CD8-positive, alpha-beta memory T cell (primary cell): ENCODE measurements at regions of chr9 and their contacts with region 1.

Region 1: DNA sequence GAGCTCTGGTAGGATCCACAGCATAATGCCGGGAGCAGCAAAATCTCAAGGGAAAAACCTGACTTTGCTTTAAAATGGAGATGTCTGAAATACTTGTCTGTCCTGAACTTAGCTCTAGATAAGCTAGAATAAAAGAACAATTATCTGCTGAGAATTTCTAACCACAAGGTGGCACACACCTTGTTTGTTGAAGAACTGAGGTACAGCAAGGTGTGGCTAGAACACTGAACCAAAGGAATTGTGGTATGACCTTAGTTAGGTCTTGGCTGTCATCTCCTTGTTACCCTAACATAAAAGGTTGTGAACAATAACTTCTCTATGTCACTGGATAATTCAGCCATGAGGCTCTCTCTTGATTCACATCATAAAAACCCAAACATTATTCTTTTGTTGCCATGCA is 72.3 kb upstream of the ANXA1 start:
- DNase-seq: peak in 1 of 5 donors; percentile 3
- H3K4me3 ChIP-seq: no peak overlapping the region
- H3K4me3 Mint-ChIP-seq: no peak overlapping the region
- H3K27ac ChIP-seq: no peak overlapping the region
- H3K27ac Mint-ChIP-seq: no peak overlapping the region
- H3K4me1 ChIP-seq: no peaks in the 10 kb centered on the region
- H3K4me1 Mint-ChIP-seq: no peaks in the 10 kb centered on the region
- H3K27me3 ChIP-seq: no peaks in the 10 kb centered on the region
- H3K27me3 Mint-ChIP-seq: peaks cover 8 to 35% of the 10 kb centered on the region in 2 donors

Region 2: GRCh38 chr9:72734631-72735030 is 344.7 kb before region 1 on chr9:
- CTCF ChIA-PET with region 1: no interaction called
- POLR2A ChIA-PET with region 1: no interaction called
- DNase-seq: no peak
- H3K4me3 ChIP-seq: no peak overlapping the region
- H3K4me3 Mint-ChIP-seq: no peak overlapping the region
- H3K27ac ChIP-seq: no peak overlapping the region
- H3K27ac Mint-ChIP-seq: no peak overlapping the region
- H3K4me1 ChIP-seq: no peaks in the 10 kb centered on the region
- H3K4me1 Mint-ChIP-seq: no peaks in the 10 kb centered on the region
- H3K27me3 ChIP-seq: no peaks in the 10 kb centered on the region
- H3K27me3 Mint-ChIP-seq: peaks cover 0 to 9% of the 10 kb centered on the region in 2 donors

Region 3: GRCh38 chr9:72997387-72997995 is 81.8 kb before region 1 on chr9:
- CTCF ChIA-PET with region 1: no interaction called
- POLR2A ChIA-PET with region 1: no interaction called
- DNase-seq: no peak
- H3K4me3 ChIP-seq: no peak overlapping the region
- H3K4me3 Mint-ChIP-seq: peak overlapping the region in 3 of 7 donors; percentile 31 to 60 (median 57)
- H3K27ac ChIP-seq: no peak overlapping the region
- H3K27ac Mint-ChIP-seq: peak overlapping the region in 1 of 8 donors; percentile 15
- H3K4me1 ChIP-seq: no peaks in the 10 kb centered on the region
- H3K4me1 Mint-ChIP-seq: peaks cover 3 to 20% (median 3%) of the 10 kb centered on the region in 3 donors
- H3K27me3 ChIP-seq: no peaks in the 10 kb centered on the region
- H3K27me3 Mint-ChIP-seq: peaks cover 0 to 4% of the 10 kb centered on the region in 2 donors

Region 4: DNA sequence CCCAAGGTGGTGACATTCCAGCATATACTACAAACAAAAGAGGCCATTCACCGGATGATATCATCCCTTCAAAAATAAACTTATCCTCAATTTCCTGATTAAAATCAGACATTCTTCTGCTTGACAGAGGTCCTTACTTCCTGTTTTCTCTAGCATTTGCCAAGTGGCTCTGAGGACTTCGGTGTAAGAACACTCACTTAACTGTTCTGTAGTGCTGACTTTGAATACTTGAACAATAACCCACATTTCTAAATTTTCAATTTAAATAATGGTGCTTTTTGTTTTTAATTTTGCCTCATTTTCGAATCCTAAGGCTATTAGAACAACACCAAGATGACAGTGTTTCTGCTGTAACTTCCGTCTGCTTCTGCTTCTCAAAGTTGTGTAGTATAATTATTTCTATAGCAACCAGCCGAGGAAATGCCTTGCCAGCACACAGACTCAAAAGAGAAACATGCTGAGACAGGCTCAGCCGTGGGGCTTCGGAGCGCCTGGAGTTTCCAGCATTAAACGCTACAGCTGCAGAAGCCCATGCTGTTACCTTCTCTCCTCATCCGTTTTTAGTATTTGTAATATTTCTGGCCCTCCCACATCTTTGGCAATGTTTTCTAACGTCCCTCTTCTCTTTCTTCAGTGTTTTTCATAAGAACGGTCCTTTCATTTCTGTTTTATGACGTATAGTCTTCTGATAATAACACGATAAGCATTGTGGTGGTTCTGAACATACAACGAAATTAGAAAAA is 52.9 kb after region 1 on chr9:
- CTCF ChIA-PET with region 1: no interaction called
- POLR2A ChIA-PET with region 1: no interaction called
- DNase-seq: peak; percentile 50 to 87 (median 83)
- H3K4me3 ChIP-seq: peak overlapping the region; percentile 70
- H3K4me3 Mint-ChIP-seq: peak overlapping the region; percentile 83 to 91 (median 87)
- H3K27ac ChIP-seq: peak overlapping the region; percentile 89
- H3K27ac Mint-ChIP-seq: peak overlapping the region; percentile 90 to 100 (median 92)
- H3K4me1 ChIP-seq: peaks cover 8% of the 10 kb centered on the region
- H3K4me1 Mint-ChIP-seq: peaks cover 24 to 43% (median 41%) of the 10 kb centered on the region in 3 donors
- H3K27me3 ChIP-seq: no peaks in the 10 kb centered on the region
- H3K27me3 Mint-ChIP-seq: no peaks in the 10 kb centered on the region

Region 5: GRCh38 chr9:73183917-73184861 is 104.9 kb after region 1 on chr9:
- CTCF ChIA-PET with region 1: interaction called, 11 read pairs
- POLR2A ChIA-PET with region 1: no interaction called
- DNase-seq: peak in 2 of 5 donors; percentile 44 to 48
- H3K4me3 ChIP-seq: no peak overlapping the region
- H3K4me3 Mint-ChIP-seq: no peak overlapping the region
- H3K27ac ChIP-seq: no peak overlapping the region
- H3K27ac Mint-ChIP-seq: no peak overlapping the region
- H3K4me1 ChIP-seq: no peaks in the 10 kb centered on the region
- H3K4me1 Mint-ChIP-seq: no peaks in the 10 kb centered on the region
- H3K27me3 ChIP-seq: no peaks in the 10 kb centered on the region
- H3K27me3 Mint-ChIP-seq: peaks cover 10 to 31% of the 10 kb centered on the region in 2 donors